Thyroid gland (tissue), 4 donors: ENCODE measurements at regions of chr4 and their contacts with region 1.

Region 1: GRCh38 chr4:52861879-52862616 is at the start of gene RASL11B:
- DNase-seq: peak; percentile 80 to 83
- H3K4me3 ChIP-seq: peak within 1 kb of the TSS; percentile 9 to 48 (median 30)
- H3K27ac ChIP-seq: no peak within 1 kb of the TSS
- H3K4me1 ChIP-seq: peaks cover 6 to 23% of the 10 kb centered on the region in 2 donors
- H3K27me3 ChIP-seq: no peaks in the 10 kb centered on the region
- CTCF ChIP-seq: peak in 3 of 6 experiments; percentile 25 to 49 (median 47)
- POLR2A ChIP-seq: peak in 1 of 2 donors; percentile 82
- total RNA-seq, gene RASL11B: 0.45 to 3.6 (median 0.60) TPM

Region 2: DNA sequence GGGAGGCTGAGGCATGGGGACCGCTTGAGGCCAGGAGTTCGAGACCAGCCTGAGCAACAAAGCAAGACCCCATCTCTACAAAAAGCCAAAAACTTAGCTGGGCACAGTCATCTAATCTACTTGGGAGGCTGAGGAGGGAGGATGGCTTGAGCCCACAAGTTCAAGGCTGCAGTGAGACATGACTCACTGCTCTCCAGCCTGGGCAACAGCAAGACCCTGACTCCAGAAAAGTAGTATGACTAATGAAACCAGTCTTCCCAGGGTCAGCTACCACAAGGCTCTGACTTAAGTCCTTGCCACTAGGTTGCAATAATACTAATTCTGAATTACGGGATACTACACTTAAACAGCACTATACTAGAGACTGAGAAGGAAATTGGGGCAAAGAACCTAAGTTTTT is 143.9 kb before region 1 on chr4:
- intact Hi-C with region 1: loop called (anchors 5 kb)
- DNase-seq: no peak
- H3K4me3 ChIP-seq: no peak overlapping the region
- H3K27ac ChIP-seq: no peak overlapping the region
- H3K4me1 ChIP-seq: peaks cover 9 to 16% of the 10 kb centered on the region in 2 donors
- H3K27me3 ChIP-seq: no peaks in the 10 kb centered on the region
- CTCF ChIP-seq: no peak
- POLR2A ChIP-seq: no peak